WTC11 (cell line): ENCODE measurements at regions of chr12 and their contacts with region 1.

Region 1: DNA sequence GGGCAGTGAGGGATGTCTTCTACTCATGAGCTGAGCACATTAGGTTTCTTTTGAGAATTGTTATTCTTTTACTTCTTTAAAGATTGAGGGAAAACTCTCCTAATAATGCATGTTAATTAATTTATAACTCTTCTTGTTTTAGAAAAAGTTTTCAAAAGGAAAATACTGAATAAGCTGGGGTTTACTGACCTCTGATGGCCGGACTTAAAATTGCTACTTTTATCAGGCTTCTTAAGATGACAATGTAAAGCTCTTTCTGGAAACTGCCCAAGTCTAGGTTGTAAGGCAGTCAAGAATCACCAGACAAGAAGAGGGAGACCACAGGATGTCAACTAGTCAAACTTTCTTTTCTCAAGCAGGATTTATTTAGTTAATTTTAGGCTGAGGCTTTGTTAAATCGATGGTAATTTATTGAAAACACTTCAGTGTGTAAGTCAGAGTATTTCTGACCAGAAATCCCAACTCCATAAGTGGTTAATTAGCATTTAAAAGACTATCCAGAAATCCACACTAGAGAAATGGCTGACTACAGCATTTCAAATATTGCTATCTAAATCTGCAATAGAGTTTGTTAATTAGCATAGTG is 82.1 kb downstream of the AVPR1A start:
- DNase-seq: no peak
- ATAC-seq: peak; percentile 57; the same call in 1 of the 2 replicates
- H3K4me3 Mint-ChIP-seq: no peak overlapping the region
- H3K27ac Mint-ChIP-seq: no peak overlapping the region
- H3K4me1 Mint-ChIP-seq: peaks cover 14% of the 10 kb centered on the region
- H3K27me3 Mint-ChIP-seq: no peaks in the 10 kb centered on the region
- CTCF ChIP-seq: peak; percentile 21; the same call in 1 of the 2 replicates

Region 2: GRCh38 chr12:62581288-62582064 is 487.5 kb before region 1 on chr12:
- CTCF ChIA-PET with region 1: interaction called, 16 read pairs
- POLR2A ChIA-PET with region 1: no interaction called
- DNase-seq: no peak
- ATAC-seq: peak; percentile 88
- H3K4me3 Mint-ChIP-seq: no peak overlapping the region
- H3K27ac Mint-ChIP-seq: no peak overlapping the region
- H3K4me1 Mint-ChIP-seq: peaks cover 4% of the 10 kb centered on the region; the same call in 1 of the 2 replicates
- H3K27me3 Mint-ChIP-seq: no peaks in the 10 kb centered on the region
- CTCF ChIP-seq: no peak

Region 3: DNA sequence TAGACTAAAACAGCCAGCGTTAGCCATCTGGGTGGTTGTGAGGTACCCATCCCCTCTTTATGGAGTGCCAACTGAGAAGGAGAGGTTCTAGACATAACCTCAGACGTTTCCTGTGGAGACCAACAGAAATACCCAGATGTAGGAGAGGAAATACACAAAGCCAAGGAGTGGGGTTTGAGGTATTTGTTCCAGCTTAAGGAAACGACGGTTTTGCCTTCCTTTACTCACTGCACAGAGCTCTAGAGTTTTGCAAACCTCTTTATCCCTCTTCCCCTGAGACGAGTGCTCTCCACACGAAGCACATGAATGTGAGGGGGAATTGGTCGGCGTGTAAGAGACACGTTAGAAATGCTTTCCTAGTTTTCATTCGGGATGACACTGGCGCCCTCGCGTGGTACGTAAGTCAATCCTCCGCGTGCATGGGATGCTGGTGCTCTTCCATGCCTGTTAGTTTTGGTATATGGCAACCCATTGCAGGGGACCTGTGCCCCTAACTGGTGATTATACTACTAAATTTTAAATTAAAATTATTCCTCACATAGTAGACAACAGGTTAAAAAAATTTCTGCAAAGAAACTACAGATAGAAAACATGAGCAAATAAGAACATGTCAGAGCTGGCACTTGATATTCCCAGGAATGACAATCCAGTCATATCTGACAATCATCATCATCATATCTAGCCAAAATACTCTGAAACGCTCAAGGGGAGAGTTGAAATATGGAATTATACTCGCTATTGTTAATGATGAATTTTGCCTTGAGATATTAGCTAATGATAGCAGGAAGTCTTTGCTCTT is 255.7 kb before region 1 on chr12:
- CTCF ChIA-PET with region 1: interaction called, 26 read pairs
- POLR2A ChIA-PET with region 1: no interaction called
- DNase-seq: peak; percentile 58
- ATAC-seq: peak; percentile 86
- H3K4me3 Mint-ChIP-seq: no peak overlapping the region
- H3K27ac Mint-ChIP-seq: no peak overlapping the region
- H3K4me1 Mint-ChIP-seq: peaks cover 16% of the 10 kb centered on the region
- H3K27me3 Mint-ChIP-seq: no peaks in the 10 kb centered on the region
- CTCF ChIP-seq: peak; percentile 41; the same call in 1 of the 2 replicates

Region 4: DNA sequence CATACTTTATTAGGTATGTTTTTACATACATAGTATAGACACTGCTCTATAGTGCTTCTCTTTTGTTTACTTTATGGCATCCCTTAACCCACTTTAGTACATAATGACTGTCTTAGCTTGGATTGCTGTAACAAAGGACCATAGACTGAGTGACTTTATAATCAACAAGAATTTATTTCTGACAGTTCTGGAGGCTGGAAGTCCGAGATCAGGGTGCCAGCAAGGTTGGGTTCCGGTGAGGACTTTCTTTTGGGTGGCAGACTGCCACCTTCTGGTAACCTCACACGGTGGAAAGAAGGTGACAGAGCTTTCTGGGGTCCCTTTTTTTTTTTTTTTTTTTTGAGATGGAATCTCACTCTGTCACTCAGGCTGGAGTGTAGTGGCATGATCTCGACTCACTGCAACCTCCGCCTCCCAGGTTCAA is 85.3 kb before region 1 on chr12:
- CTCF ChIA-PET with region 1: interaction called, 27 read pairs
- POLR2A ChIA-PET with region 1: no interaction called
- DNase-seq: peak; percentile 32
- ATAC-seq: peak; percentile 92
- H3K4me3 Mint-ChIP-seq: no peak overlapping the region
- H3K27ac Mint-ChIP-seq: no peak overlapping the region
- H3K4me1 Mint-ChIP-seq: no peaks in the 10 kb centered on the region
- H3K27me3 Mint-ChIP-seq: no peaks in the 10 kb centered on the region
- CTCF ChIP-seq: no peak

Region 5: DNA sequence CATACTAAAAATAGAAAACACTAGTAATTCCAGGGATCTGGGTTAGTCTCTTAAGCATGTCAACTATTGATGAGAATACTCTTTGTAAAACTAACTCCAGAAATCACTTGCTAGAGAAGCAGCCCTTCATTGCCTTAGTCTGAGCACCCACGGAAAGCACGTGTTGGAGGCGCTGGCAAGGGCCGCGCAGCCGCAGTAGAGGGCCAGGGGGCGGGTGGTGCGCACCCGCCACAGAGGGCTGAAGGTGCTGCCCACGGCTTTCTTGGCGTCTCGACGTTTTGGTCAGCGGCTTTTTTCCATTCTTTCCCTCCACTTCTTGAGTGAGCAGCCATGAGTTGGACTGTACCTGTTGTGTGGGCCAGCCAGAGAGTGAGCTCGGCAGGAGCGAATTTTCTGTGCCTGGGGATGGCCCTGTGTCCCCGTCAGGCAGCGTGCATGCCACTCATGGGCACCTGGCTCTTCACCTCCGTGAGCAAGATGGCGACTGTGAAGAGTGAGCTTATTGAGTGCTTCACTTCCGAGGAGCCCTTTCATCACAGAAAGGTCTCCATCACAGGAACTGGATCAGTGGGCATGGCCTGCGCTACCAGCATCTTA is 65.6 kb before region 1 on chr12:
- CTCF ChIA-PET with region 1: no interaction called
- POLR2A ChIA-PET with region 1: no interaction called
- DNase-seq: no peak
- ATAC-seq: no peak
- H3K4me3 Mint-ChIP-seq: no peak overlapping the region
- H3K27ac Mint-ChIP-seq: no peak overlapping the region
- H3K4me1 Mint-ChIP-seq: peaks cover 23% of the 10 kb centered on the region
- H3K27me3 Mint-ChIP-seq: no peaks in the 10 kb centered on the region; the same call in 1 of the 2 replicates
- CTCF ChIP-seq: no peak

Region 6: GRCh38 chr12:63021116-63021515 is 47.8 kb before region 1 on chr12:
- CTCF ChIA-PET with region 1: interaction called, 12 read pairs
- POLR2A ChIA-PET with region 1: no interaction called
- DNase-seq: no peak
- ATAC-seq: no peak
- H3K4me3 Mint-ChIP-seq: peak overlapping the region; percentile 15
- H3K27ac Mint-ChIP-seq: peak overlapping the region; percentile 91
- H3K4me1 Mint-ChIP-seq: peaks cover 65% of the 10 kb centered on the region
- H3K27me3 Mint-ChIP-seq: no peaks in the 10 kb centered on the region
- CTCF ChIP-seq: no peak

Region 7: GRCh38 chr12:63103494-63104131 is 34.7 kb after region 1 on chr12:
- CTCF ChIA-PET with region 1: no interaction called
- POLR2A ChIA-PET with region 1: no interaction called
- DNase-seq: no peak
- ATAC-seq: no peak
- H3K4me3 Mint-ChIP-seq: no peak overlapping the region
- H3K27ac Mint-ChIP-seq: no peak overlapping the region
- H3K4me1 Mint-ChIP-seq: no peaks in the 10 kb centered on the region
- H3K27me3 Mint-ChIP-seq: no peaks in the 10 kb centered on the region
- CTCF ChIP-seq: peak; percentile 72